ENCODE measurements at regions of chr1 and their contacts with region 1.

Region 1: DNA sequence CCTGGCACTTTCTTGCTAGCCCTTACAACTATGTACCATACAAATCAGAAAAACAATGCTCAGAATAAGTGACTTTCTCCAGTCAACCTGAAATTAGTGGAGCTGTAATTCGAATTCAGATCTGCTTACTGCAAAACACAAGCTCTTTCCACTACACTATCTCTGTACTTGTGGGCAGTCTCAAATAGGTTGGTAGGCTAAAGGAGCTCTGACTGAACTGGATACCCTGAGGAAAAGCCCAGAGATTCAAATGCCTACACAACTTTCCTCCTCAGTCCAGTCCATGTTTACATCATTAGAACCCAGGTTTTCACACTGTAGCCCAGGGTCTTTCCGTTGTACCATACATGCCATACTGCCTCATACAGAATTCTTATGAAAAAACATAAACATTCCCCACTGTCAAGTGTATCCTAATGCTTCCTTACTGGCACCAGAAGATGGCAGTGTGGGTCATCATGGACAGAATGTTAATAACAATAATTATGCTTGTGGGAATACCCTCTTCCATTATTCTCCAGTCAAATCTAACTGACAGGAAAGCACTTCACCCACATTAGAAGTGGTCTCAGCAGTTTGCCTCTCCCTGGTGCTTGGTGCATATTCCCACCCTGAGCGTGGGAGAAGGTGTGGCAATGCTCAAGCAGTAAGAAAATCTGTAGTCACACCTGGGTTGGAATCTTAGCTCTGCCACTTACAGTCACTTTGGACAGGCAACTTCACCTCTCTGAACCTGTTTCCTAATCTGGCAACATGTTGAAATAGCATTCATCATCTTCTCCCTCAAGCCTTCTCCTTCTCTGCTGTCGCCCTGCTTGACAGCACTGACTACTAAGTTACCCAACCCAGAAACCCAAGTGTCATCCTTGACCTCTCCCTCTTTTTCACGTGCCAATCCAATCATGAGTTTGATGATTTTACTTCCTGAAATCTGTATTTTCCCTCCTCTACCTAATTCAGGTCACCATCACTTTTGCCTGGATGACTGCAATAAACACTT is 14.4 kb upstream of the ZFYVE9 start:
- DNase-seq: peak; percentile 71
- H3K4me3 ChIP-seq: no peak overlapping the region
- H3K27ac ChIP-seq: no peak overlapping the region
- H3K4me1 ChIP-seq: no peaks in the 10 kb centered on the region
- H3K27me3 ChIP-seq: no peaks in the 10 kb centered on the region

Region 2: GRCh38 chr1:51861669-51862068 is 265.8 kb before region 1 on chr1:
- in situ Hi-C with region 1: no loop called
- DNase-seq: peak; percentile 33
- H3K4me3 ChIP-seq: no peak overlapping the region
- H3K27ac ChIP-seq: no peak overlapping the region
- H3K4me1 ChIP-seq: no peaks in the 10 kb centered on the region
- H3K27me3 ChIP-seq: no peaks in the 10 kb centered on the region

Region 3: DNA sequence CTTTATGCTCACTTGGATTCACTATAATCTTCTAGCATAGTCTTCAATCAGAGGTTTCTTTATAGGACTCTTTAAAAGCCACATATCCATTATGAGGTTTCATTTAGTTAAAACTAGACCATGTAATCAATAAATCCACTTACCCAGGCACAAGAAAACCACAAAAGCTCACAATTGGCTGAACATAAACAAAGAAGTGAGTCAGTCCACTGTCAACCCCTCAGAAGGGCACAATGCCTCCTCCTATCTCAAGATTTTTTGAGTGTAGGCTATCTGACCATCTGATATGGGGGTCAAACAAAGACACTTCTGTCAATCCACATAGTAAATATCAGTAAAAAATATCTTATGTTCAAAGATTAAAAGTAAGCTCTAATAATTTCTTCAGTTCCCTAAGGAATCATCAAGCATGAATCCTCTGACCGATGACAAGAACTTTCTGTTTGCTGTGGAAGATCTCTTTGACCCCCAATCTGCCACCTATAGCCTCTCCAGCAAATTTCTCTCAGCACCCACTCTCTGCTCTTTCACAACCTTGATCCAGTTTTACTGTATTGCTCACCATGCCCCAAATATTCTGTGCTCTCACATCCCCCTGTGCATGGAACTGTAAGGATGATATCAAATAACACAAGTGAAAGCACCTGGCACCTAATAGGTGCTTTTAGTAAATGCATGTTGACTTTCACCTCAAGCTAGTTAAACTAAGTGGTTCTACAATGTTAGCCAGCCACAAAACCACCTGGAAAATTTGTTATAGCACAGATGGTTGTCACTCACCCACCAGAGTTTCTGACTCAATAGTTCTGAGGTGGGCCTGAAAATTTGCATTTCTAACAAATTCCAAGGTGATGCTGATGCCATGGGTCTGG is 153.6 kb before region 1 on chr1:
- in situ Hi-C with region 1: no loop called
- DNase-seq: peak; percentile 35
- H3K4me3 ChIP-seq: no peak overlapping the region
- H3K27ac ChIP-seq: peak overlapping the region; percentile 19; the same call in 1 of the 2 replicates
- H3K4me1 ChIP-seq: peaks cover 43% of the 10 kb centered on the region
- H3K27me3 ChIP-seq: no peaks in the 10 kb centered on the region

Region 4: GRCh38 chr1:52296345-52296744 is 168.9 kb after region 1 on chr1:
- in situ Hi-C with region 1: loop called (anchors 5 kb)
- DNase-seq: peak; percentile 70
- H3K4me3 ChIP-seq: no peak overlapping the region
- H3K27ac ChIP-seq: no peak overlapping the region
- H3K4me1 ChIP-seq: peaks cover 10% of the 10 kb centered on the region; the same call in 1 of the 2 replicates
- H3K27me3 ChIP-seq: no peaks in the 10 kb centered on the region

Measured in GM23248 (cell line).